SK-N-SH (cell line): ENCODE measurements at regions of chr15 and their contacts with region 1.

Region 1: GRCh38 chr15:61100512-61100911 is 128.6 kb downstream of the RORA start:
- DNase-seq: peak; percentile 66
- H3K4me3 ChIP-seq: no peak overlapping the region
- H3K27ac ChIP-seq: no peak overlapping the region
- H3K4me1 ChIP-seq: peaks cover 3 to 6% of the 10 kb centered on the region in 2 experiments; a peak in 1 of 4 replicates
- H3K27me3 ChIP-seq: no peaks in the 10 kb centered on the region
- CTCF ChIP-seq: no peak
- EP300 ChIP-seq: peak in 1 of 2 experiments; percentile 88; a peak in 2 of 4 replicates
- RAD21 ChIP-seq: peak; percentile 51

Region 2: GRCh38 chr15:61069394-61070075 is 31.0 kb before region 1 on chr15:
- CTCF ChIA-PET with region 1: no interaction called
- POLR2A ChIA-PET with region 1: no interaction called
- DNase-seq: peak; percentile 74
- H3K4me3 ChIP-seq: no peak overlapping the region
- H3K27ac ChIP-seq: no peak overlapping the region; a peak in 1 of 4 replicates
- H3K4me1 ChIP-seq: peaks cover 0 to 9% of the 10 kb centered on the region in 2 experiments; a peak in 2 of 4 replicates
- H3K27me3 ChIP-seq: no peaks in the 10 kb centered on the region
- CTCF ChIP-seq: no peak
- EP300 ChIP-seq: peak in 1 of 2 experiments; percentile 41; a peak in 1 of 4 replicates
- RAD21 ChIP-seq: no peak

Region 3: GRCh38 chr15:61080221-61081026 is 20.1 kb before region 1 on chr15:
- CTCF ChIA-PET with region 1: no interaction called
- POLR2A ChIA-PET with region 1: no interaction called
- DNase-seq: no peak
- H3K4me3 ChIP-seq: no peak overlapping the region
- H3K27ac ChIP-seq: no peak overlapping the region
- H3K4me1 ChIP-seq: peaks cover 6 to 19% of the 10 kb centered on the region in 2 experiments; a peak in 3 of 4 replicates
- H3K27me3 ChIP-seq: no peaks in the 10 kb centered on the region
- CTCF ChIP-seq: no peak
- EP300 ChIP-seq: no peak
- RAD21 ChIP-seq: no peak

Region 4: DNA sequence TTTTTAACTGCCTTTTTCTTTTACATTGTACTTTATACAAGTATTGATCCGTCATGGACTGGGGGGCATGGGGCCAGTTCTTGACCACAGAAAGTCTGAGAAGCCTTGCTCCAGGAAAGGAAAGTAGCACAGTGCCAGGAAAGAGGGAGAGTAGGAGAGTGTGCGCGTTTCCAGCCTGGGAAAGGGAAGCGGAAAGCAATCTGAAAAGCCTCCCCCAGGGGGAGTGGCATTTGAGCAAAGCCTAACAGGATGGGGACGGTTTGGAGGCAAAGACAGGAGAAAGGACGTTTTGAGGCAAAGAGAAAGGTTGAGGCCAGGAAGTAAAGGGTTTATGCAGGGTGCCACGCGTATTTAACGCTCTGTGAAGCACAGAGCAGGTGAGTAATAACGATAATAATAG is 11.7 kb after region 1 on chr15:
- CTCF ChIA-PET with region 1: interaction called, 13 read pairs
- POLR2A ChIA-PET with region 1: no interaction called
- DNase-seq: no peak
- H3K4me3 ChIP-seq: no peak overlapping the region
- H3K27ac ChIP-seq: no peak overlapping the region
- H3K4me1 ChIP-seq: peaks cover 0 to 9% of the 10 kb centered on the region in 2 experiments; a peak in 2 of 4 replicates
- H3K27me3 ChIP-seq: no peaks in the 10 kb centered on the region
- CTCF ChIP-seq: no peak
- EP300 ChIP-seq: no peak
- RAD21 ChIP-seq: no peak